MCF 10A (cell line): ENCODE measurements at regions of chr3 and their contacts with region 1.

Region 1: GRCh38 chr3:179811321-179812095 is 158.7 kb downstream of the USP13 start:
- DNase-seq: peak; percentile 82
- H3K4me3 Mint-ChIP-seq: no peak overlapping the region
- H3K27ac Mint-ChIP-seq: peak overlapping the region; percentile 95
- H3K4me1 Mint-ChIP-seq: peaks cover 8% of the 10 kb centered on the region
- H3K27me3 Mint-ChIP-seq: no peaks in the 10 kb centered on the region
- CTCF ChIP-seq: peak; percentile 65

Region 2: GRCh38 chr3:178875836-178876235 is 935.7 kb before region 1 on chr3:
- CTCF ChIA-PET with region 1: no interaction called
- POLR2A ChIA-PET with region 1: no interaction called
- intact Hi-C with region 1: no loop called
- DNase-seq: no peak
- H3K4me3 Mint-ChIP-seq: no peak overlapping the region
- H3K27ac Mint-ChIP-seq: no peak overlapping the region
- H3K4me1 Mint-ChIP-seq: no peaks in the 10 kb centered on the region
- H3K27me3 Mint-ChIP-seq: no peaks in the 10 kb centered on the region
- CTCF ChIP-seq: no peak

Region 3: GRCh38 chr3:179768080-179768479 is 43.4 kb before region 1 on chr3:
- CTCF ChIA-PET with region 1: interaction called, 5 read pairs
- POLR2A ChIA-PET with region 1: no interaction called
- intact Hi-C with region 1: loop called (anchors 2 kb)
- DNase-seq: peak; percentile 69
- H3K4me3 Mint-ChIP-seq: no peak overlapping the region
- H3K27ac Mint-ChIP-seq: no peak overlapping the region
- H3K4me1 Mint-ChIP-seq: no peaks in the 10 kb centered on the region
- H3K27me3 Mint-ChIP-seq: no peaks in the 10 kb centered on the region
- CTCF ChIP-seq: peak; percentile 60

Region 4: DNA sequence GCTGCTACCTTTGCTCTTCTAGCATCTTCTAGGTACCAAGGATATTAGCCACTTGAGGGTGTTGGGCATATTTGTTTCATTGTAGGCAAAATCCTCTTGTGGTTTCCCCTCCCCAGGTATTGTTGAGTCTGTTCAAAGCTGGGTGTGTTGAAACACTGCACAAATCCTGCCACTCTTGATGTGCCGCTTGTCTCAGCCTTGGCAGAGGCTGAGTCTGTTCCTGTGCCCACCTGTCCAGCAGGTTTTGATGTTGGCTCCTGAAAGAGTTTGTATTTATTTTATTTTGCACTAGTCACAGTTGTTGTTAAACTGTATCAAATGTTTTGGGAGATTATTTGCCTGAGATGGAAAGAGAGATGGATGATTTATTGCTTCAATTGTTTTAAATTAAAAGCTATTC is 22.5 kb before region 1 on chr3:
- CTCF ChIA-PET with region 1: no interaction called
- POLR2A ChIA-PET with region 1: no interaction called
- intact Hi-C with region 1: no loop called
- DNase-seq: no peak
- H3K4me3 Mint-ChIP-seq: no peak overlapping the region
- H3K27ac Mint-ChIP-seq: no peak overlapping the region
- H3K4me1 Mint-ChIP-seq: no peaks in the 10 kb centered on the region
- H3K27me3 Mint-ChIP-seq: no peaks in the 10 kb centered on the region
- CTCF ChIP-seq: no peak

Region 5: GRCh38 chr3:180063810-180064209 is 252.3 kb after region 1 on chr3:
- CTCF ChIA-PET with region 1: no interaction called
- POLR2A ChIA-PET with region 1: no interaction called
- intact Hi-C with region 1: loop called (anchors 1 kb)
- DNase-seq: peak; percentile 23
- H3K4me3 Mint-ChIP-seq: no peak overlapping the region
- H3K27ac Mint-ChIP-seq: no peak overlapping the region
- H3K4me1 Mint-ChIP-seq: peaks cover 11% of the 10 kb centered on the region
- H3K27me3 Mint-ChIP-seq: no peaks in the 10 kb centered on the region
- CTCF ChIP-seq: no peak

Region 6: DNA sequence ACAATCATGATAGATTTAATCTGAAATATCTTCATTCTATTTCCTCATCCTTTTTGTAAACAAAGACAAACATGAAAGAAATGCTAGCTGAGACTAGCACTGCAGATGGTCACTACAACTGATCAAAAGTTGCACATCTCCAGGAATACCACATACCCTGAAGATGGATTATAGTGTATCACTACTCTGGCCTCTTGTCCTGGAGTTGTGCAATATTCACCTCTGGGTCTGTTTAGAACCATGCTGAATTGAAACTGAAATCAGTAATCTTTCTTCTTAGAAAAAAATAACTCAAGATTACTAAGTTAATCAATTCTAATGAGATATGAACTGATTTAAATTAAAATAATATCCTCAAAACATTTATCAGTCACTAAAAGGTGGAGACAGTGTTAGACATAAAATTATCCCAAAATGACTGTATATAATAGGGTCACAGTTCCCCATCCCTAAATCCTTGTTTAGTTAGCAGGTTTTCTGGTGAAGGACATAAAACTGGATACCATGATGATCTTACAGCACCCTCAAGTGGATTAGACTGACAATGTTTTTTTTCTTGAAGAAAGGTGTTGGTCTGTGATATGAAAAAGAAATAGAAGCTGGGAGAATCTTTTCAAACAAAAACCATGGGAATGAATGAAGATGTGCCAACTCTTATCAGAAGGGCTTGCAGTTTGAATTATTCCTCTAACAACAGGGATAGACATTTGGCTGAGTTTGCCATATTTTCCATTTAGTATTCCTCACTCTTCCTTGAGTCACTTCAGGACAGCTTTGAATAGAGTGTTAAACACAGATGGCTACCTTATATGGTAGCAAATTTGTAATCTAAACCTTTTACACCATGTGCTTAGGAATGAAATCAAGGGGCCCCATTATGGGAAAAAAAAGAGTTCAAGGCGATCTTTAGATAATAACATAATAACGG is 783.4 kb after region 1 on chr3:
- CTCF ChIA-PET with region 1: interaction called, 43 read pairs
- POLR2A ChIA-PET with region 1: no interaction called
- intact Hi-C with region 1: loop called (anchors 1 kb)
- DNase-seq: peak; percentile 55
- H3K4me3 Mint-ChIP-seq: no peak overlapping the region
- H3K27ac Mint-ChIP-seq: no peak overlapping the region
- H3K4me1 Mint-ChIP-seq: peaks cover 9% of the 10 kb centered on the region
- H3K27me3 Mint-ChIP-seq: no peaks in the 10 kb centered on the region
- CTCF ChIP-seq: peak; percentile 55